ENCODE measurements at regions of chr9 and their contacts with region 1.

Region 1: GRCh38 chr9:122912964-122913673 is at the start of gene ZBTB6:
- DNase-seq: peak; percentile 87 to 88
- ATAC-seq: peak; percentile 100
- H3K4me3 ChIP-seq: peak within 1 kb of the TSS; percentile 62
- H3K27ac ChIP-seq: peak within 1 kb of the TSS; percentile 80 to 95
- H3K4me1 ChIP-seq: peaks cover 8% of the 10 kb centered on the region
- CTCF ChIP-seq: no peak
- EP300 ChIP-seq: no peak
- POLR2A ChIP-seq: peak; percentile 8; the same call in 1 of the 2 replicates
- RAD21 ChIP-seq: no peak
- polyA plus RNA-seq, gene ZBTB6: 10.0 and 10.3 TPM in 2 replicates

Region 2: DNA sequence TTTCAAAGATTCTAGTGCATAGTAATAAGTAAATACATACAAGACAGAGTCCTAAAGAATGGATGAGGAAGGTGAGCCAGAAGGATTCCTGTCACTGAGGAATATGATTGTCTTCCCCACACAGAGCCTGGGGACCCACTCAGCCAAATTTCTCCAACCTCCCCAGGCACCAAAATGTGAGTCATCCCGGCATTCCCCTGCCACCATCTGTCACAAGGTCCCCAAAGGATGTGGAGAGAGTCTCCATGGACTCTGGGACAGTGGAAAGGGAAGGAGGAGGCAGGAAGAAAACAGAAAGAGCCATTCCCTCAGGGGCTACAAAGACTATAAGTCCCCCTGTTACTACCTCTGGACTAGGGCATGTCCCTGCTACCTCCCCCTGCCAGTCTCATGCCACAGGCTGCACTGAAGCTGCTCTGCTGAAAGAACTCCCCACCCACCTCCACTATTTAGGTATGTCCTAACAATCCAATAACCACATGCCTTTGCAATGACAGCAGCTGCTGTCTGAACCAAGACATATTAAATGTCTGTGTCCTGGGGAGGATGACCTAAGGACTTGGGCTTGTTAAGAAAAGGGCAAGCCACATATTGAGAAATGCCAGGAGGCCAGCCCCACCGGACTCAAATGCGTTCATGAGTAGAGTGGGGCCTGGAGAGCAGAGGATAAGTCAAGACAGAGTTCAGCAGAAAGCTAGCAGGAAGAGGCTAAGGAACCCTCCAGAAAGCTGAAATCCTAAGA is 135.0 kb before region 1 on chr9:
- CTCF ChIA-PET with region 1: no interaction called
- POLR2A ChIA-PET with region 1: no interaction called
- DNase-seq: peak in 1 of 2 experiments; percentile 48
- ATAC-seq: peak; percentile 77 to 80
- H3K4me3 ChIP-seq: no peak overlapping the region
- H3K27ac ChIP-seq: peak overlapping the region in 1 of 2 experiments; percentile 29; a peak in 1 of 6 replicates
- H3K4me1 ChIP-seq: peaks cover 13% of the 10 kb centered on the region
- CTCF ChIP-seq: no peak
- EP300 ChIP-seq: no peak
- POLR2A ChIP-seq: no peak
- RAD21 ChIP-seq: no peak

Region 3: GRCh38 chr9:122931226-122932121 is 18.4 kb after region 1 on chr9 and contains the start of gene ZBTB26:
- CTCF ChIA-PET with region 1: no interaction called
- POLR2A ChIA-PET with region 1: interaction called, 25 read pairs
- DNase-seq: peak; percentile 93 to 99
- ATAC-seq: peak; percentile 99
- H3K4me3 ChIP-seq: peak within 1 kb of the TSS; percentile 81
- H3K27ac ChIP-seq: peak within 1 kb of the TSS; percentile 88 to 96
- H3K4me1 ChIP-seq: peaks cover 19% of the 10 kb centered on the region; the same call in 2 of the 3 replicates
- CTCF ChIP-seq: no peak
- EP300 ChIP-seq: no peak
- POLR2A ChIP-seq: peak; percentile 79
- RAD21 ChIP-seq: no peak
- polyA plus RNA-seq, gene ZBTB26: 9.0 and 9.3 TPM in 2 replicates

Region 4: DNA sequence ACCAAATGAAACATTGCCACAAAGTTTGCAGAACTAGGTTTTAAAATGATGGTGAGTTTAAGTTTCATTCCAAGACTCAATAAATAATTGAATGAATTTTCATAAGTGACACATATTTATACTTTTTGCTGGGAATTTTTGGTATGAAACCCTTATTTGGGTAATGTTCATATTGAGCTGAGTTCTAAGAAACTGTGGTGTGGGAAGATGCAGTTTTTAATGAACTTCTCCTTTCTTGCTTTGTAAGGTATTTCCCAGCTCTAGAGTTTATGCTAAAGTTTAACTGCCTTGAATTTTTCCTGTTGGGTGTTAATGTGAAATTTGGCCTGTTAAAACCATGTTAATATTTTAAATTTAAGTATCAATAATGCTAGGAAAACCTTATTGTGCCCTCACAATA is 42.8 kb after region 1 on chr9:
- CTCF ChIA-PET with region 1: no interaction called
- POLR2A ChIA-PET with region 1: no interaction called
- DNase-seq: no peak
- ATAC-seq: no peak
- H3K4me3 ChIP-seq: no peak overlapping the region
- H3K27ac ChIP-seq: no peak overlapping the region
- H3K4me1 ChIP-seq: peaks cover 16% of the 10 kb centered on the region
- CTCF ChIP-seq: no peak
- EP300 ChIP-seq: no peak
- POLR2A ChIP-seq: no peak
- RAD21 ChIP-seq: no peak

Measured in A549 (cell line).